ENCODE measurements at regions of chr15 and their contacts with region 1.

Region 1: DNA sequence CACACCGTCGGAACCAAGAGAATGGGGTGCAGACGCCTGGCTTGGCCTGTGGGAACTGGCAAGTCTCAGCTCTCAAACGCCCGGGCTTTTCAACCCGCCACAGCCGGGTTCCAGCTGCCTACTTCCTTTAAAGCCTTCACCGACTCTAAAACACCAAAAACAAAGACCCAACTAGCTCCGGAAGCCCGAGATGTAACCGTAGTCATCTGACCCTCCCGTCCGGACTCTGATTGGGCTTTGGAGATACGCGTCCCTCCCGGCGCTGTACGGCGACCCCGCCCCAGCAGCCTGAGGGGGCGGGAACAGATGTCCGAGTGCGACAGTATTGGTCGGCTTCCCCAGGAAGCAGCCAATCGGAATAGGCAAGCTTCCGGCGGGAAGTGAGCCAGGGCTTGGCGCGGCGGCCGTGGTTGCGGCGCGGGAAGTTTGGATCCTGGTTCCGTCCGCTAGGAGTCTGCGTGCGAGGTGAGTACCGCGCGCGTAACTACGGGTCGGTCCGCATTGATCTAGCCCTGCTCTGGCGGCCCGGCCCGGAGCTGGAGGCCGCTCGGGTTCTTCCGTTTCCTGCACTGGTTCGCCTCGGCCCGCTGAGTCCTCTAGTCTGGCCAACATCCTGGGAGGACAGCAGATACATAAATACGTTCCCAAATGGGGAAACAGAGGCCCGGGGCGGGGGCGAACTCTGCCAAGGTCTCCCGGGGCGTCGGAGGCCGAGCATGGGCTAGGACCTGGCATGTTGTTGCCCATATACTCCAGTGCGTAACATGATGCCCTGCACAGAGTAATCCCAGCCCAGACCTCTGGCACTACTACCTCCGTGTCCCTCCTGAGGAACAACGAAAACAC is at the start of gene BLM:
- DNase-seq: peak; percentile 99
- H3K4me3 ChIP-seq: peak within 1 kb of the TSS; percentile 65 to 74 (median 69)
- H3K27ac ChIP-seq: peak within 1 kb of the TSS; percentile 84 to 94 (median 92)
- H3K4me1 ChIP-seq: peaks cover 5 to 17% (median 16%) of the 10 kb centered on the region in 4 donors
- H3K27me3 ChIP-seq: no peaks in the 10 kb centered on the region
- CTCF ChIP-seq: peak; percentile 2 to 60 (median 36)
- EP300 ChIP-seq: no peak
- POLR2A ChIP-seq: no peak
- total RNA-seq, gene BLM: under 0.01 to 1.5 (median 0.73) TPM

Region 2: GRCh38 chr15:90557186-90558084 is 159.8 kb before region 1 on chr15:
- intact Hi-C with region 1: no loop called
- DNase-seq: no peak
- H3K4me3 ChIP-seq: peak overlapping the region in 2 of 4 donors; percentile 2 to 12
- H3K27ac ChIP-seq: peak overlapping the region; percentile 78 to 85 (median 82)
- H3K4me1 ChIP-seq: peaks cover 87 to 91% (median 89%) of the 10 kb centered on the region in 4 donors
- H3K27me3 ChIP-seq: no peaks in the 10 kb centered on the region
- CTCF ChIP-seq: no peak
- EP300 ChIP-seq: no peak
- POLR2A ChIP-seq: no peak

Region 3: DNA sequence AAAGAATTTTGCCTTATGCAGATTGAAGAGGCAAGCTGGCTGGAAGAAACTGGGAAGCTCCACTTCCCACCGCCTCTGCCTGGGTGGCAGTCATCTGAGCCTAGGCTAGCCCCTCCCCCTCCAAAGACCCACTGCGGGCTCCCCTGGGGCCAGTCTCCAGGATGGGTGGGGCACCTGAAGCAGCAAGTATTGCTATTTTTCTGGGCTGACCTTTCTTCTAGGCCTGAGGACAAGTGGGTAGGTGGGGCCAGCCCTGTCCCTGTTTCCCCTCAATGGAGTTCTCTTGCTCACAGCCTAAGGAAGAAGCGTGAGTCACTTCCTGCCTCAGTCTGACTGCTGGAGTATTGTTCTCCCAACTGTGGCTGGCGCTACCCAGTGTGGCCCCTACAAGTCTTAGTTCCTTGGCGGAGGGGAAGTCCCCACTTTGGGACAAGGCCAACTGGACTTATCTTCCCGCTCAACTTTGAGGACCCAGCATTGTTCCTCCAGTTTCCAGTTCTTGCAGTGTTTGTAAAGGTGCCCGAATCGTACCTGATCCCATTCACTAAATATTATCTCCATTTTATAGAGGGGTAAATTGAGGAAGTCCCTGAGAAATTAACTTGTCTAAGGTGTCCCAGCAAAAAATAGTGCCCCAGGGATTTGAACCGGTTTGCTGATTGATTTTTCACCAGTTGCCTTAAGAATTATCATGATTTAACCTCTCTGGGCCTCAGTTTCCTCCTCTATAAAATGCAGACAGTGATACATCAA is 152.6 kb after region 1 on chr15:
- intact Hi-C with region 1: loop called (anchors 5 kb)
- DNase-seq: no peak
- H3K4me3 ChIP-seq: peak overlapping the region in 1 of 4 donors; percentile 85
- H3K27ac ChIP-seq: peak overlapping the region; percentile 92 to 96 (median 96)
- H3K4me1 ChIP-seq: peaks cover 46 to 56% (median 49%) of the 10 kb centered on the region in 4 donors
- H3K27me3 ChIP-seq: peaks cover 0 to 5% (median 0%) of the 10 kb centered on the region in 4 donors
- CTCF ChIP-seq: no peak
- EP300 ChIP-seq: no peak
- POLR2A ChIP-seq: no peak

Measured in esophagus muscularis mucosa (tissue), 4 donors.